Adrenal gland (tissue), 19 donors: ENCODE measurements at regions of chr3 and their contacts with region 1.

Region 1: DNA sequence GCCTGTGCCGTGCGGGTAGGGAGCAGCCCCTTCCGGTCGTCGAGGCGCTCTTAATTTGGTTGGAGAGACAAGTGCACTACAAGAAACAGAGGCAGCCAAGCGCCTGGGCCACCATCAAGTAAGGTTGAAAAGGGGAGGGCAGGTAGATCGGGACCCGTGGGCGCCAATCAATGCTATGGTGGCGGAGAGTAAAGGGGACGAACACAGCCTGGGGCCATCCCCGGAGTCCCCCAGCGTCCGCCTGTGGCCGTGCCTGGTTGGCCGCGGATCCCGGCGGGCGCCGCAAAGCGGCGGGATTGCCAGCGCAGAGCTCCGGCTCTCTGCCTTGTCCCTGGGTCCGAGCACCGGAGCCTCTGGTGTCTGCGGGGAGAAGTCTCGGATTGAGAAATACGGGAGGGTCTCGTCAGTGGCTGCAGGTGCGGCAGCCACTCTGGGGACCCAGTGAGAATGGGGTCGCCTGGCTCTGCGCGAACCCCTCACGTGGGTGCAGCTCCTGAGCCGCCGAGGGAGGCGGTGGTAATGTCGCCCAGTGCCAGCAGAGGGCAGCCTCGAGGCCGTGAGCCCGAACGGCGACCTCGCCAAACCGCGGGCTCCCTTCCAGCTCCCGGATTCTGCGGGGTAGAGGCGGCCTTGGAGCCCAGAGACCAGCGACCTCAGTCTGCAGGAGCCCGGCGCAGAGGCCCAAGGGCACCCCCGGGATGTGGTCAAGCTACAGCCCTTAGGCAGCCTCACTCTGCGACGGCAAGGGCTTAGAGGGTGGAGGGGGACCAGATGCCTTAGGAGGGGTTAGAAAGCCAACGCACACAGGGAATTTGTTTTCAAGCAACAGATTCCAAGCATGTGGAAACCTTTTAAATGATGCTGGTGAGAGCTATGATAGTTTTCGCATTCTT is 10.8 kb downstream of the FOXL2 start:
- DNase-seq: peak; percentile 84 to 91 (median 88)
- H3K4me3 ChIP-seq: peak overlapping the region in 1 of 4 donors; percentile 54
- H3K27ac ChIP-seq: peak overlapping the region in 1 of 5 donors; percentile 45
- H3K4me1 ChIP-seq: peaks cover 0 to 32% of the 10 kb centered on the region in 2 donors
- H3K27me3 ChIP-seq: peaks cover 46% of the 10 kb centered on the region
- CTCF ChIP-seq: peak; percentile 82 to 95 (median 90)
- POLR2A ChIP-seq: no peak

Region 2: GRCh38 chr3:138009476-138010272 is 926.4 kb before region 1 on chr3 and contains the start of gene CLDN18:
- intact Hi-C with region 1: no loop called
- DNase-seq: no peak
- H3K4me3 ChIP-seq: no peak within 1 kb of the TSS
- H3K27ac ChIP-seq: no peak within 1 kb of the TSS
- H3K4me1 ChIP-seq: no peaks in the 10 kb centered on the region
- H3K27me3 ChIP-seq: no peaks in the 10 kb centered on the region
- CTCF ChIP-seq: no peak
- POLR2A ChIP-seq: no peak
- total RNA-seq, gene CLDN18: 0.17 to 0.31 (median 0.25) TPM in 3 of 9 donors, not detected in the others

Region 3: GRCh38 chr3:138984816-138985215 is 48.7 kb after region 1 on chr3:
- intact Hi-C with region 1: loop called in 1 of 2 experiments (anchors 5 kb)
- DNase-seq: no peak
- H3K4me3 ChIP-seq: no peak overlapping the region
- H3K27ac ChIP-seq: no peak overlapping the region
- H3K4me1 ChIP-seq: no peaks in the 10 kb centered on the region
- H3K27me3 ChIP-seq: no peaks in the 10 kb centered on the region
- CTCF ChIP-seq: no peak
- POLR2A ChIP-seq: no peak